ENCODE measurements at regions of chr15 and their contacts with region 1.

Region 1: DNA sequence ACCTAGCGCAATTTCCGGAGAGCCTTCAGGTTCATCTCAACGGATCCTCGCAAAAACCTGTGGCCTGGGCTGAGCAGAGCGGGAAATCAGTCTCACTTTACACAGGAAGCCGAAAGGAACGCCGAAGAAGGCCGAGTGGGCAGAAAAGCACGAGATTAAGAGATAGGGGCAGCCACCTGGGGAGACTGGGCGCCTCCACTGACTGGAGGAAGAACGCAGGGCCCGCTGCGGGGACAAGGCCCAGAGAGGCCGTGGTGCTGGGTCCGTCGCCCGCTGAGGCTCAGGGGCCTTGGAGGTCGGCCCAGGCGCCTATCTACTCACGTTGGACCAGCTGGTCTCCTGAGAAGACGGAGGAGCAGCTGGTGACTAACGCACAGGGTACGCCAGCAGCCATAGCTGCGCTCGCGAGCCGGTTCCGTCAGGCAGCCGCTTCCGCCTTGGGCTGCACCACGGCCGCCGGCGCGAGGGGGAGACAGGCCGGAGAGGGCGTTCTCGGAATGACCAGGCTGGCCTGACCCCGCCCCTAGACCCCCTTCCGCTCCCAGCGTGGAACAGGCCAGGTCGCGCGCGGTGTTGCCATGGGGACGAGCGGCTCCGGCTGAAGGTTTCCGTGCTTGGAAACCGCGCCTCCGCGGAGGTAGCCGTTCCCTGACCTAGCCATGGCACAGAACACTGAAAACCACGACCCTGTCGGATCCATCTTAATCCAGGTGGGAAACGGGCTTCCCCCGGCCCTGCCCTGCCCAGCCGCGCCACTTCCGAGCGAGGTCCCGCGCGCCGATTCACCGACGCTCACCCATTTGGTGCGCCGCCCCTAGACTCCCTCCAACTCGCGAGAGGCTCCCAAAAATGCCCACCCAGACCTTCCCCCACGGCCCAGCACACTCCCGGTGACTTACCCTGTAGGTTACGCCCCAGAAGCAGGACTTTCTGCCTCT is at the starts of genes AAGAB and IQCH:
- DNase-seq: peak; percentile 99
- total RNA-seq, gene AAGAB: 27.9 to 29.2 TPM
- total RNA-seq, gene IQCH: 1.2 to 2.3 TPM

Region 2: DNA sequence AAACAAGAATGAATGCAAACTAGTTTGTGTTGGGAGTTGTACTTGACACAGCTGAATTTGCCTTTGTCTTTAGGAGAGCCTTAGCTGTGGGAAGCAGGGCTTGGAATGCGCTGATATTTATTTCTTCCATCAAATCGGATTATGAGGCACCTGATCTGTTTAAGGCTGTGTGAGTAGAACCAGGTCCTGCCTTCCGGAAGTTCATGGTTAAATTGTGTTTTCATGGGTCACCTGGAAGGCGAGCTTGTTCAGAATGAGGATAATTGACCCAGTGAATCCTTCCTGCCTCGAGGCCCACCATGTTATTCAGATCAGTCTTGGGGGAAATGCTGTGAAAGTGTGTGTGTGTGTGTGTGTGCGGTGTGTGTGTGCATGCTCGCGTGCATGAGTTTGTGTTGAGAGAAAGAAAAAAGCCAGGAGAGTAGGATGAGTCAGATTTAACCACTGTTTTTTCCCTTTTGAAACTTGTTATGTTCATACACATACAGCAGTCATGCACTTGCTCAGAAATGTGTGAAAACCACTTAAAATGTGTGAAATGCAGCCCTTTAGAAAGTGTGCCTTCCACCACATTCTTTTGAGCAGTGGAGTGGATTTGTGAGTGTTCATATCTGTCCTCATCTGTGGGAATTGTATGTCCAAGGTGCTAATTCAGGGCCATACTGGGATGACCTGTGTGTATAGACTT is 152.5 kb before region 1 on chr15:
- intact Hi-C with region 1: loop called in 1 of 2 experiments (anchors 5 kb)
- DNase-seq: no peak

Region 3: DNA sequence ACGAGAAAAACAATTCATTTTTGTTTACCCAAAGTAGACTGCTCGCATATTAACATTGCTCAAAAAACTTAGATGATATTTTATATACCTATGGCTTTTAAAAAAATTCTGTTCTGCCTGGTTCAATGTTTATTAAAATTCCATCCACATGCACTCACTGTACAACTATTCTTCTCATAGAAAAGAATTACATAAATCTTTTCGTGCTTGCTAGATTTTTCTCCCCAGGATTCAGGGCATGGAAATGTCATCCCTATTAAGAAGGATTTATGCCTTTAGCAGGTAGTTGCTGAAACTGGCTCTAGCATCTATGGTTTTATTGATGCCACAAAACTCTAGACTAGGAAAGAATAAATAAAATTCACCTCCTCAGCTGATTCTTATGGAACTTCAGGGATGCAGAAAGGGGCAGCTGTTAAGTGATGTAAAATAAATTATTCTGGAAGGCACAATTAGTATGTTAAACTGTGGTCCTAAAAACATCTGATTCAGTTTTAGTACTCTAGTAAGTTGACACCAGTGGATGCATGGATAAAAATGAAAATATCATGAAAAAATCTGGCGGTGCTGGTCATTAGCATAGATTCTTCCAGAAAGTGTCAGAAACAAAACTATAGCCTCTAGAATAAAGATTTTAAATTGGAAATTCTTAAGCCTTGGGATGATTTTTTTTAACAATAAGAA is 41.7 kb before region 1 on chr15:
- intact Hi-C with region 1: no loop called
- DNase-seq: no peak

Region 4: GRCh38 chr15:67290319-67290718 is 35.8 kb after region 1 on chr15:
- intact Hi-C with region 1: no loop called
- DNase-seq: no peak

Region 5: DNA sequence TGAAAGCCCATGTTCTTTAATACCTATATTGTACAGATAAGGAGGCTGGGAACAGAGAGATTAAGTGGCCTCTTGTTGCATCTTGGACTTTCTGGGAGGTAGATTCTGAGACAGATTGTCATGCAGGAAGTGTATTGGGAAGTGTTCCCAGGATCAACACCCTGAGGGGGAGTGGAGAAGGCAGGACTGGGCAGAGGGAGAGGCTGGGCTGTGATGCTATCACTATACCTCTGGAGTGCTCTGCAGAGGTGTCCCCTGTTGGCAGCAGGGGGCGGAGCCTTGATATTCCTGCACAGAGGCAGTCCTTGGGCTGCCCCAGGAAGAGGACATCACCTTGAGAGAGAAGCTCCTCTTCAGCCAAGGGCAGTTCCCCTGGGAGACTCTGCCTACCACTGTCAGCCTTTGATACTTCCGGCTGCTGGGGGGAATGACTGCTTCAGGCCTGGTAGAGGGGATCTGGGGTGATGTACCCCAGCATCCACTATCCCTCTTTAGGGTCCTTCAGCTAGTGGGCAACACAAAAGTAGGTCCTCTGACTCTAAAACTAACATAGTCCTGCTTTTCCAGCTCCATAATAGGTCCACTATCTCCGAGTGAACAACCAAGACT is 682.8 kb after region 1 on chr15:
- intact Hi-C with region 1: loop called in 1 of 2 experiments (anchors 5 kb)
- DNase-seq: no peak

Region 6: DNA sequence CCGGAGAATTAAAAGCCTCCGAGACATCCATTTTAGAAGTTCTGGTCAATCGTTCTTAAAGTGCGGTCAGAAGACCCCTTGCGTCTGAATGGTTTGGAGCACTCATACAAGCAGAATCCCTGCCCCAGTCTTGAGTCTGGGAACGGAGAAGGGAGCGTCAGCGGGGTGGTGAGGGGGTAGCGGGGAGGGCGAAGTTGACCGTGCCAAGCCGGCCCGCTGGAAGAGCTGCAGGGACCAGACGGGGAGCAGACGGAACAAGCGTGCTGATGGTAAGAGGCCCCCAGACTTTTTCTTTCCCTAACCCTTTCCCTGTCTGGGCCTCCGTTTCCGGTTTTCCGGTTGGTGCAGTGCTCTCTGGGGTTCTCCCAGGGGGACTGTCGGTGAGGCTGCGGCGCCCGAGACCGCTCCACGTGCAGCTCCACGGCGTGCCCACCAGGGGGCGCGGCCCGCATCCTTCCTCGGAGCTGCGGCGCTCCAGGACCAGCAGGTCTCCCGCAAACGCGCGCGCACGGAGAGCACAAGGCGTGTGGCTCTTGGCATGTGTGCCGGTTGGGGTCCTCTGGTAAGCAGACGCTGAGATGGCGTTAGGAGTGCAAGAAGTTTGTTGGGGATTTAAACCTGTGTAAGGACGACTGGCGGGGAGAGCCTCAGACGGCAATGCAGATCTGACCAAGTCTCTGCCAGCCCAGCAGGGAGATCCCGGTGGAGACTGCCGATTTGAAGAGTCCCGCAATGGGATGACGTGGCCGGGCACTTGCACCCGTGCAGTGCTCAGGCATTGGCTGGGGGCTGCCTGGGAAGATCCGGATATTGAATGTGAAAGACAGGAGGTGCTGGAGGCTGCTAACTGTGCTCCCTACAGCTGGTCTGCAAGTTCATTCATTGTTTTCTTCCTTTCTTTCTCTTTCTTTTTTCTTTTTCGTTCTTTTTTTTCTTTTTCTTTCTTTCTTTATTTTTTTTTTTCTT is 1305.1 kb after region 1 on chr15:
- intact Hi-C with region 1: no loop called
- DNase-seq: peak; percentile 94